GM10248 (cell line): ENCODE measurements at regions of chr22 and their contacts with region 1.

Region 1: GRCh38 chr22:37588546-37589215 is 8.8 kb upstream of the LGALS2 start:
- DNase-seq: no peak
- CTCF ChIP-seq: no peak

Region 2: DNA sequence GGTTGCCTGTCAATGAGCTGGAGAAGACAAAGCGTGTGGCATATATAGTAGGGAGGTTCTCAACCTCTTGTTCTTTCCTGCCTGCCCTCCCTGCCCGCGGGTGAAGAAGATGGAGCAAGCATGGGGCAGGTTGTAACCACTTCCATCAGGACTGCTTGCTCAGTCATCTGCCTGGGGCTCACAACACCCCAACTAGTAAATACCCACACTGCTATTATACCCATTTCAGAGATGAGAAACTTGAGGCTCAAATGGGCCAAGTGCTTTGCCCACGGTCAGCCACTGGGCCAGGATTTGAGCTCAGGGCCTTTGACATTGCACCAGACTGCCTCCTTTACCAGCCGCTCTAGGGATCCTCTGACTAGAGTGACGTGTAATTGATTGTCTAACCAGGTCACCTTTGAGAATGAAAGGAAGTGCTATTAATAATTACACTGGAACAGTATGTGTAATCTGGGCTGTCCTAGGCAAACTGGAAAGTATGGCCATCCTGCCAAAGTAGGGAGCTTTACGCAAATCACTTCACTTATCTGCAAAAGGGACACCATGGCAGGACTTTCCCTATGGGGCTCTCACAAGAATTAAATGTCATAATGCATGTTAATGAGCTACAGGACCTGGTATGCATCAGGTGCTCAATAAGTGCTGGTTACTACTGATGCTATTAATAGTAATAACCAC is 31.2 kb before region 1 on chr22:
- CTCF ChIA-PET with region 1: interaction called, 365 read pairs
- POLR2A ChIA-PET with region 1: no interaction called
- DNase-seq: no peak
- CTCF ChIP-seq: no peak

Region 3: GRCh38 chr22:37575490-37576003 is 13.1 kb before region 1 on chr22:
- CTCF ChIA-PET with region 1: interaction called, 365 read pairs
- POLR2A ChIA-PET with region 1: no interaction called
- DNase-seq: no peak
- CTCF ChIP-seq: no peak

Region 4: GRCh38 chr22:37650463-37651136 is 61.9 kb after region 1 on chr22:
- CTCF ChIA-PET with region 1: no interaction called
- POLR2A ChIA-PET with region 1: no interaction called
- DNase-seq: no peak
- CTCF ChIP-seq: no peak